Common myeloid progenitor, CD34-positive (primary cell): ENCODE measurements at regions of chr3 and their contacts with region 1.

Region 1: DNA sequence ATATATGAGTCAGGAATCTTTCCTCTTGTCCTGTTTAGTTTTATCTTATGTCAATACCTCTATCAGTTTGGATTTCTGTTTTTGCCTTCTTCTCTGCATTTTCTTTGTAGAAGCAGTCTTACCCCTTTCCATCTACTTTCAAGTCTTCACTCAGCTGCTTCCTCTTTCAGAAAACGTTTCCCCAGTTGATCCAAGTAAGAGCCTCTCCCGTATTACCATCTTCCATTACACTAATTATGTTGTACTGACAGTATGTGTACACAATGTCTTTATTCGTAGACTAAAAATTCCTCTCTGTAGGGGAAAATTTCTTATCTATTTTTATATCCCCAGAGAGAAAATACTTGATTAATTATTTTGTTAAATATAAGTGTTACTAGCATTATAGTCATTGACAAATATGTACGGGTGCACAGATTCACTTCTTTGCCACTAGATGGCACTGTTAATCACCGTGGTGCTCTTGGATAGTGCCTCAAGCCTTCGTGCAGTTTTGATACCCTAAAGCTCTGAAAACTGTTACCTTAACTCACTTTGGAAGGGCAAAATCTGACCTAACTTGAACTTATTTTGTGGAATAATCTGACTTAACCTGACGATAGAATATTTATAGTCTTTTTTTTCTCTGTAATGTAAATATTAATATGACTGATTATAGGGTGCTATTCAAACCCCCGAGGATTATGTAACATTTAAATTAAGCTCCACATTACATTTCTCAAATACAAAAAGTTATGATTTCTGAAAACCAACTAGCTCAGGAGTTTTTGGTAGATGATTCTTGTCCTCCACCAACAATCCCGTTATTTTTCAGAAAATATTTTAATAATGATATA is 74.2 kb upstream of the POU1F1 start:
- DNase-seq: peak; percentile 59 to 78 (median 76)
- H3K4me3 ChIP-seq: no peak overlapping the region
- H3K27ac ChIP-seq: no peak overlapping the region
- H3K4me1 ChIP-seq: no peaks in the 10 kb centered on the region
- H3K27me3 ChIP-seq: no peaks in the 10 kb centered on the region

Region 2: DNA sequence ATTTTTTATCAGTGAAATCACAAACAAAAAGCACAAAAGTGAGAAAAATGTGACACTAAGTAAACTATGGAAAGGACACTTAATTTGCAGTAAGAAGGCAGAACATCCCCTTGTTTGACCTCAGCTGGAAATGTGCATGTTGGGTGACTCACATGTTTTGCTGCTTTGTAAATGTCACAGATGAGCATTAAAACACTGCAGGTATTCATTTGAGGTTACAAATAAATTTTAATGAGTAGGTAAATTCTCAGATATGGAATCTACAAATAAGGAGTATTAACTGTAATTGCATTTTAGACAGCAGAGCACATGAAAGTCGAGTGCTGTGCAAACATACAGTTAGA is 103.2 kb before region 1 on chr3:
- CTCF ChIA-PET with region 1: no interaction called
- POLR2A ChIA-PET with region 1: no interaction called
- DNase-seq: no peak
- H3K4me3 ChIP-seq: no peak overlapping the region
- H3K27ac ChIP-seq: no peak overlapping the region
- H3K4me1 ChIP-seq: no peaks in the 10 kb centered on the region
- H3K27me3 ChIP-seq: no peaks in the 10 kb centered on the region

Region 3: DNA sequence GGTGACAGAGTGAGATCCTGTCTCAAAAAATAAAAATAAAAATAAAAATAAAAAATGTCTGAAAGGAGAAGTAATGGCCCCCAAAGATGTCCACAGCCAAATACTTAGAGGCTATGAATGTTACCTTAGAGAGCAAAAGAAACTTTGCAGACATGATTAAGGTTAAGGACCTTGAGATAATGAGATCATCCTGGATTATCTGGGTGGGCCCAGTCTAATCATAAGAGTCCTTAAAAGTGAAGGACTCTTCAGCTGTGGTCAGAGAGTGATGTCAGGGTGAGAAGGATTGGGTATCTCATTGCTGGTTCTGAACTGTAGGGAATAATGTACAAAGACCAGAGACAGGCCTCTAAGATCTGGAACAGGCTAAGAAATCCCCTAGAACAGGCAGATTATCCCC is 10.7 kb after region 1 on chr3:
- CTCF ChIA-PET with region 1: interaction called, 13 read pairs
- POLR2A ChIA-PET with region 1: no interaction called
- DNase-seq: no peak
- H3K4me3 ChIP-seq: no peak overlapping the region
- H3K27ac ChIP-seq: no peak overlapping the region
- H3K4me1 ChIP-seq: no peaks in the 10 kb centered on the region
- H3K27me3 ChIP-seq: no peaks in the 10 kb centered on the region